BJ (cell line): ENCODE measurements at regions of chr17 and their contacts with region 1.

Region 1: GRCh38 chr17:10618202-10618635 is 38.9 kb downstream of the MYH3 start:
- DNase-seq: no peak
- H3K4me3 ChIP-seq: no peak overlapping the region
- H3K27me3 ChIP-seq: no peaks in the 10 kb centered on the region
- CTCF ChIP-seq: peak; percentile 95

Region 2: DNA sequence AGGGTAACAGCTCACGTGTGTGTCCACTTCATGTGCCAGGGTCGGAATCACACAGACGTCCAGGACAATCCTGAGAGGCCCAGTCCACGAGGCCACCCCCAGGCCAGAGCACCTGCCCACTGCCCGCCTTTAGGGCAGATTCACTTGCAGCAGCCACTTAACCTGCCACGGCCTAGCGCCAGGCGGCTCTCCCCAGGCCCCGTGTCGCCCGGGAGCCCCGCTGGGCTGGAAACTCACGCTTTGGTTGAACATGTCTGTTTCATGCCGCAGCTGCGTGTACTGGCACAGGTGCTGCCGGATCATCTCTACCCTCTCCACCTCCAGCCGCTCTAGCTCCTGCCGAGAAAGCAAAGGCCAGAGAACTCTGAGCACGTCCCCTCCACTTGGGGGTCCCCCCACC is 700.5 kb before region 1 on chr17:
- CTCF ChIA-PET with region 1: interaction called, 98 read pairs
- POLR2A ChIA-PET with region 1: no interaction called
- DNase-seq: no peak
- H3K4me3 ChIP-seq: no peak overlapping the region
- H3K27me3 ChIP-seq: no peaks in the 10 kb centered on the region
- CTCF ChIP-seq: no peak

Region 3: GRCh38 chr17:10295728-10296343 is 322.4 kb before region 1 on chr17:
- CTCF ChIA-PET with region 1: interaction called, 121 read pairs
- POLR2A ChIA-PET with region 1: no interaction called
- DNase-seq: no peak
- H3K4me3 ChIP-seq: no peak overlapping the region
- H3K27me3 ChIP-seq: no peaks in the 10 kb centered on the region
- CTCF ChIP-seq: peak; percentile 71

Region 4: GRCh38 chr17:10327640-10328039 is 290.6 kb before region 1 on chr17:
- CTCF ChIA-PET with region 1: interaction called, 366 read pairs
- POLR2A ChIA-PET with region 1: no interaction called
- DNase-seq: peak; percentile 18
- H3K4me3 ChIP-seq: no peak overlapping the region
- H3K27me3 ChIP-seq: no peaks in the 10 kb centered on the region
- CTCF ChIP-seq: peak; percentile 90

Region 5: GRCh38 chr17:10631048-10631700 is 13.0 kb after region 1 on chr17:
- CTCF ChIA-PET with region 1: interaction called, 219 read pairs
- POLR2A ChIA-PET with region 1: no interaction called
- DNase-seq: no peak
- H3K4me3 ChIP-seq: no peak overlapping the region
- H3K27me3 ChIP-seq: no peaks in the 10 kb centered on the region
- CTCF ChIP-seq: peak; percentile 94

Region 6: DNA sequence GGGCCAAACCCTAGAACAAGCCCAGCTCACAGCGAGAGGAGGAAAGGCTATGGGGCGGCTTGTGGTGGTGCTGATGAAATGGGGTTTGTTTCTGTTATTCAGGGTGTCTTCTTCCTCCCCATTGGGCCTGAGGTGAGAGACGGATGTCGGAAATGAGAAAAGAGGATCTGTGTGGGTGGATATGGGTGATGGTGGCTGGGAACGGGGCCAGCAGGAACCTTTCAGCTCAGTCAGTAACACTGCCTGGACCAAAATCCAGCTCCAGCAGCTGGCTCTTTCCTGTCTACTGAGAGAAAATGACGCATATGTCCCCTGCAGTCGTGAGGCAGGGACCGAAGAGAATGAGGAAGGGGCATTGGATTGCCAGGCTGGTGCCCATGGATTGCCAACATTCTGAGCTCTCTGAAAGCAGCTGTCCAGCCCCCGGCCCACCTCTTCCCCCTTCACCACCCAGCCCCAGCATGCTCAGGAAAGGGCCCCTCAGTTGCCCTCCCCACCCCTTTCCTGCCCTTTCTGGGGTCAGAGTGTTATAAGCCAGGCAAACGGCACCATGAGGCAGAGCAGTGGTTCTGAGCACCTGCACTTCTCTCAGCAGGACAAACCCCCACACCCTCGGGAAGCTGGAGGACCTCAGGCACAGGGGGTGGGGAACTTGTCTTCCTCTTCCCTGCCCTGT is 34.9 kb after region 1 on chr17:
- CTCF ChIA-PET with region 1: no interaction called
- POLR2A ChIA-PET with region 1: no interaction called
- DNase-seq: no peak
- H3K4me3 ChIP-seq: no peak overlapping the region
- H3K27me3 ChIP-seq: no peaks in the 10 kb centered on the region
- CTCF ChIP-seq: no peak